ENCODE measurements at regions of chr9 and their contacts with region 1.

Region 1: DNA sequence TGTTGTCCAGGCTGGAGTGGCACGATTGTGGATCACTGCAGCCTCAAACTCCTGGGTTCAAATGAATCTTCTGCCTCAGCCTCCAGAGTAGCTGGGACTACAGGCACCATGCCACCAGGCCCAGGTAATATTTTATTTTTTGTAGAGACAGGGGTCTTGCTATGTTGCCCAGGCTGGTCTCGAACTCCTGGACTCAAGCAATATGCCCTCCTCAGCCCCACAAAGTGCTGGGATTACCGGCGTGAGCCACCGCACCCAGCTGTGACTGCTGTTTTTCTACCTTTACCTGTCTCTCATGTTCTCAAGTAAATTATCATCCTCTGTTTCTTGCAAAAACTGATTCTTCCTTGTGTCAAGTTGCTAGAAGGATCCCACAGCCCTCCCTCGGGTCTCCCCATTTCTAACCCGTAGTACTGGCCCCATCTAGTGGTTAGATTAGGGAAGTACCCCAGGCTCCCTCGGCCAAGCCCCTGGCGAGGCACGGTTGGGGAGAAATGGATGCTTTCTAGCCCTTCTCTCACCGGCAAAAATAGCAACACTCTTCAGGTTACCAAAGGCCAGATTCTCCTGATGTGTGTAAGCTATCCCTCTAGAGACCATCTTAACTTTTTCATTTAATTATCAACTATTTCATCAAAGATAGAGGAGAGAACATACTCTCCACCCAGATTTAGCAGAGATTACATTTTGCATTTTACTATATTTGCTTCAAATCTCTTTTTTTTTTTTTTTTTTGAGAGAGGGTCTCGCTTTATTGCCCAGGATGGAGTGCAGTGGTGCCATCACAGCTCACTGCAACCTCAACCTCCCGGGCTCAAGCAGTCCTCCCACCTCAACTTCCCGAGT is 19.2 kb upstream of the TOR1B start:
- DNase-seq: peak; percentile 77 to 82
- ATAC-seq: peak; percentile 93
- H3K4me3 ChIP-seq: no peak overlapping the region
- H3K27ac ChIP-seq: no peak overlapping the region
- H3K4me1 ChIP-seq: no peaks in the 10 kb centered on the region
- H3K27me3 ChIP-seq: no peaks in the 10 kb centered on the region

Region 2: DNA sequence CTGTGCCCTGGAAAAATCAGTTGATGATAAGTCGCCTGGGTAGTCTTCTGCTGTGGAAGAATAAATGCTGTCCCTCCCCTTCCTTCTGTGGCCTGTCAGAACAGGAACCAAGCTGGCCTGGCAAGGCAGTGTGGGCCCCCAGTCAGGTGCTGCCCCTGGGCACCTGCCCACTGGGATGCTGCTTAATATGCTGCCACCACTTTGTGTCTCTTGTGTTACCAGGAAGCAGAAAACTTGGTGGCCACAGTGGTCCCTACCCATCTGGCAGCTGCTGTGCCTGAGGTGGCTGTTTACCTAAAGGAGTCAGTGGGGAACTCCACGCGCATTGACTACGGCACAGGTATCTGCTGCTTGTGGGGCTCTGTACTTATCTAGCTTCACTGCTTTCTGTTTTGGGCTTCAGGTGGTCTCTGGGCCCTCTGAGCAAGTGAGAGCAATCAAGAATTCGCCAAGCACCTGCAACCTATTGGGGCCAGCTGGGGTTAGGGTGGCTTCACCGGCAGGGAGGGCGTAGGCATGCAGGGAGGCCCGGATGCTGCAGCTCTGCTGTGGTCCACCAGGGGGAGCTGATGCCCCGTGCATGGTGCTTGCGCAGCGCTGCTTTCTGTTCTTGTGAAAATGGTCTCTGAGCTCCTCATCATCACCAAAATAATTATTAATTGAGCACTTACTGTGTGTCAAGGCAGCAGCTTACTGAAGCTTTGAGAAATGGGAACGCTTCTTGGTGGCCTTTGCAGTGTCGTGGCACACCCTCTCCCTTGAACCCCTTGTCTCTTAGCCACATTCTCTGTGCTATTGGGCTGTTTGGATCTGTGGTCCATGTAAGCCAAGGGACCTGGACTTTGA is 652.2 kb before region 1 on chr9:
- intact Hi-C with region 1: loop called in 1 of 2 experiments (anchors 5 kb)
- DNase-seq: peak; percentile 84 to 93
- ATAC-seq: peak; percentile 92
- H3K4me3 ChIP-seq: no peak overlapping the region
- H3K27ac ChIP-seq: peak overlapping the region in 1 of 2 donors; percentile 38
- H3K4me1 ChIP-seq: no peaks in the 10 kb centered on the region
- H3K27me3 ChIP-seq: no peaks in the 10 kb centered on the region

Region 3: GRCh38 chr9:129550199-129550839 is 233.4 kb before region 1 on chr9:
- intact Hi-C with region 1: no loop called
- DNase-seq: peak; percentile 91 to 97
- ATAC-seq: peak; percentile 89
- H3K4me3 ChIP-seq: peak overlapping the region; percentile 28 to 35
- H3K27ac ChIP-seq: peak overlapping the region in 1 of 2 donors; percentile 9
- H3K4me1 ChIP-seq: no peaks in the 10 kb centered on the region
- H3K27me3 ChIP-seq: no peaks in the 10 kb centered on the region

Region 4: DNA sequence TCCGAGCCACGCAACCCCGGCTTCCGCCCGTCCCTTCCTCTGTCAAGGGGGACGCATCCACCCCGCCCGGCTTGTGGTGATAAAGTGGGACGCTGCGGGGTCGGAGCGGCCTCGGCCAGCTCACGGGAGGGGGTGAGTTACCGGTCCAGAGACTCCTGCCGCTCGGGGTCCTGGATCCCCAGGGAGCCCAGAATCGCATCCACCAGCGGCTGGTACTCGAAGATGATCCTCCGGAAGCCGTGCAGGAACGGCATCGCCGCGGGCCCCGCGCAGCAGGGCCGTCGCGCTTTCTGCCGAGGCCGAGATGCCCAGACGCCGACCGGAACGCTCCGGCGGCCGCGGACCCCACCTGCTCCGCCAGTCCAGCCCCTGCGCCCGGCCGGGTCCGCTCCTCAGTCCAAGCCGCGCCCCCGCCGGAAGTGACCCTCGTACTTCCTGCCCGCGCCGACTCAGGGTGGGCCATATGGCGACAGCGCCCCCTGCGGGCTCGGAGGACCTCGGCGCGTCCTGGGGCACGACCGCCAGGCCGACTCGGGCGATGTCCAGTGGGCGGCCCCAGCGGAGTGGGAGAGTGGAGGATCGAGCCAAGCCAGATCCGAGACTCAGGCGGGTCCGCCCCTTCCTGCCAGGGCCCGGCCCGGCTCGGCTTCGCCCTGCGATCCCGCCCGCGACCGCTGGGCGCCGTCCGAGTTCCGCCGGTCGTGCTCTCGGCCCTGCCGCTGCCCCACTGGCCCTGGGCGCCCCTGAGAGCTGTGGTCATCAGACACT is 141.8 kb before region 1 on chr9 and contains the start of gene ASB6:
- intact Hi-C with region 1: loop called (anchors 1 kb)
- DNase-seq: peak; percentile 98 to 100
- ATAC-seq: peak; percentile 98
- H3K4me3 ChIP-seq: peak within 1 kb of the TSS; percentile 70 to 86
- H3K27ac ChIP-seq: peak within 1 kb of the TSS in 1 of 2 donors; percentile 23
- H3K4me1 ChIP-seq: no peaks in the 10 kb centered on the region
- H3K27me3 ChIP-seq: no peaks in the 10 kb centered on the region
- total RNA-seq, gene ASB6: 15.8 to 20.8 TPM

Region 5: GRCh38 chr9:129737479-129738274 is 46.1 kb before region 1 on chr9:
- intact Hi-C with region 1: loop called (anchors 2 to 5 kb)
- DNase-seq: peak; percentile 91 to 95
- ATAC-seq: peak; percentile 94
- H3K4me3 ChIP-seq: peak overlapping the region; percentile 23 to 71
- H3K27ac ChIP-seq: peak overlapping the region in 1 of 2 donors; percentile 15
- H3K4me1 ChIP-seq: no peaks in the 10 kb centered on the region
- H3K27me3 ChIP-seq: no peaks in the 10 kb centered on the region

Region 6: DNA sequence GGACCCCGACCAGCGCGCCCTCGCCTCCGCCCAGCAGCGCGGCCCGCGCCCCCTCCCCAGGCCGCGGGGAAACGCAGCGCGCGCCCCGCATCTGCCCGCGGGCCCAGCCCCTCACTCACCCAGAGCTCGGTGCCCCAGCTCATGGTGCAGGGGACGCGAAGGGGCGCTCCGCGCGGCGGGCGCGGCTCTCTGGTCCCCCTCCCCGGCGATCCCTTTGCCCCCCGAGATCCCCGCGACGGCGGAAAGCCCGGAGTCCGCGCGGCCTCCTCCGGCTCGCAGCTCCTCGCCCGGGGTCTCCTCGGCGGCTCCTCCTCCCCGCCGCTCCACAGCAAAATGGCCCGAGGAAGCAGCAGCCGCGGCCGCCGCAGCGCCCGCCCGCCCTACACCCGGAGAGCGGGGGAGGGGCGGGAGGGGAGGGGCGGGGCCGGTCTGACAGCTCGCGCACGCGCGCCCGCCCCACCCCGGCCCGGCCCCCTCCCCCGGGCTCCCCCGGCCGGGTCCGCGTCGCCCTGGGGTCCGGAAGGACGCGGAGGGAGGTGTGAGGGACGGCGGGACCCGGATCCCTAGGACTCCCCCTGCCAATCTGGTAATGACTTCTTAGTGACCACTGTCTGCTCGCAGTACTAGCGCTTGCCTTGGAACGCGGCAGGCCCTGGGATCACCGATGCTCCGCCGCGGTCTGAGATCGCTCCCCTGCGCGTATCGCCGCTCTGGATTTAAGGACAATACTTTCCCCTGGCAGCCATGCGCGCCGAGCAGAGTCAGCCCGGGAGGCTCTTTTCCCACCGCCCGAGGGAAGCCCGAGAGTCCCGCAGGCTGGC is 259.3 kb after region 1 on chr9 and contains the start of gene FNBP1:
- intact Hi-C with region 1: no loop called
- DNase-seq: peak; percentile 88 to 94
- ATAC-seq: peak; percentile 95
- H3K4me3 ChIP-seq: peak within 1 kb of the TSS; percentile 90 to 96
- H3K27ac ChIP-seq: peak within 1 kb of the TSS; percentile 46 to 79
- H3K4me1 ChIP-seq: no peaks in the 10 kb centered on the region
- H3K27me3 ChIP-seq: no peaks in the 10 kb centered on the region
- total RNA-seq, gene FNBP1: 92.2 to 92.9 TPM

Region 7: DNA sequence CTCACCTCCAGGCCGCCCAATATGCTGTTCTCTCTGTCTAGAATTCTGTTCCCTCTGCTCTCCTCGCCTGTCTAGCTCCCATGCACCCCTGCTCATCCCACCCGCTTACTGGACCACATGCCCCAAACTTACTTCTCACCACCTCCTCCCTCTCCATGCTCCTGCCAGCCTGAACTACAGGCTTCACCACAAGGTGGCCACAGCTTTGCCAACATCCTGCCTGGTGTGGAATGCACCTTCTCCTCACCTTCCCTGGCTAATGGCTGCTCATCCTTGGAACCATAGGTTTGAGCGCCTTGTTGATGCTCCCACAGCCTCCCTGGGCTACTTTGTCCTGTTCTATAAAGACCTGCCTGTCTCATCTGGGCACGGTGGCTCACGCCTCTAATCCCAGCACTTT is 1234.9 kb after region 1 on chr9:
- intact Hi-C with region 1: no loop called
- DNase-seq: no peak
- ATAC-seq: no peak
- H3K4me3 ChIP-seq: no peak overlapping the region
- H3K27ac ChIP-seq: no peak overlapping the region
- H3K4me1 ChIP-seq: no peaks in the 10 kb centered on the region
- H3K27me3 ChIP-seq: no peaks in the 10 kb centered on the region